ENCODE measurements at regions of chr1 and their contacts with region 1.

Region 1: GRCh38 chr1:217431393-217431792 is 199.5 kb downstream of the GPATCH2 start:
- DNase-seq: no peak
- H3K4me3 ChIP-seq: no peak overlapping the region
- H3K4me3 Mint-ChIP-seq: no peak overlapping the region
- H3K27ac Mint-ChIP-seq: no peak overlapping the region
- H3K4me1 ChIP-seq: no peaks in the 10 kb centered on the region
- H3K4me1 Mint-ChIP-seq: no peaks in the 10 kb centered on the region
- H3K27me3 ChIP-seq: no peaks in the 10 kb centered on the region
- H3K27me3 Mint-ChIP-seq: no peaks in the 10 kb centered on the region
- CTCF ChIP-seq: no peak

Region 2: DNA sequence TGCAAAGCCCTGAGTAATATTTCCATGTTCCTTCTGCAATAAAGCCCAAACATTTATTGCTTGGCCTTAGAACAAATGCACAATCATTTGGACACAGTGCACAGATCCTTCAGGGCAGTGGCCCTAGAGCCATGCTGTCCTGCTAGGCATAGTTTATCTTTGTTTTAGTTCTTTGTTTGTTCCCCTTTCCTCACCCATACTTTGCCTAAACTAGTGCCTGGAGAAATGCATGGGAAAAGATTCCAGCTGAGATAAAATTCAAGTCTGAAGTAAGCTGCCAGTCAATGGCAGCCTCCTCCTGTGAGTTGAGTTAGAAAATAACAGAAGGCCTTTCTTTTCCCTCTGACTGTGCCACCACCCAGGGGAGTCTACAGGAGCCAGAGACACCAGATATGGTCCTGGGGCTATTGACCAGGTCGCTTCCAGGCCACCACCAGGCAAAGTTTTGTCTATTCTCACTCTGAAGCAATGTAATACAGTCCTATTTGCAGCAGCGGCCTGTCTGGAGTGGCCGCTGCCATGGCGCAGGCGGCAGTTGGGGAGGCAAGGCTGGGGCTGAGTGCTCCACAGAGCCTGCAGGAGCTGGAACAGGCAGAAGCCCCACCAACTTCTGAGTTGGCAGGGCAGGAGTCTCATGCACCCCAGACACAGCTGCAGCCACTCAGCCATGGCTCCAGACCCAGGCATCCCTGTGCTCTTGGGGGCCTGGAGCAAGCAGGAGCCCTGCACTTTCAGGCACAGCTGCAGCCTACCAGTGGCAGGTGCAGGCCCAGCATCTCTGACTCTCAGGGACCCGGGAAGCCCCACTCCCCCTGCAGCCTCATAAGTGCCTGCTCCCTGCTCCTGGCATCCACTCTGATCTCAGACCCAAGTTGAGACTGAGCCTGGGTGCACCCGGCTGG is 59.1 kb before region 1 on chr1:
- CTCF ChIA-PET with region 1: no interaction called
- POLR2A ChIA-PET with region 1: no interaction called
- intact Hi-C with region 1: no loop called
- DNase-seq: no peak
- H3K4me3 ChIP-seq: no peak overlapping the region
- H3K4me3 Mint-ChIP-seq: no peak overlapping the region
- H3K27ac Mint-ChIP-seq: no peak overlapping the region
- H3K4me1 ChIP-seq: no peaks in the 10 kb centered on the region
- H3K4me1 Mint-ChIP-seq: no peaks in the 10 kb centered on the region
- H3K27me3 ChIP-seq: no peaks in the 10 kb centered on the region
- H3K27me3 Mint-ChIP-seq: no peaks in the 10 kb centered on the region
- CTCF ChIP-seq: no peak

Region 3: GRCh38 chr1:217542837-217543236 is 111.4 kb after region 1 on chr1:
- CTCF ChIA-PET with region 1: no interaction called
- POLR2A ChIA-PET with region 1: no interaction called
- intact Hi-C with region 1: no loop called
- DNase-seq: no peak
- H3K4me3 ChIP-seq: no peak overlapping the region
- H3K4me3 Mint-ChIP-seq: no peak overlapping the region
- H3K27ac Mint-ChIP-seq: no peak overlapping the region
- H3K4me1 ChIP-seq: 0 out of 2 replicates have a peak, but pooled peaks cover 9% of the 10 kb centered on the region
- H3K4me1 Mint-ChIP-seq: no peaks in the 10 kb centered on the region
- H3K27me3 ChIP-seq: no peaks in the 10 kb centered on the region
- H3K27me3 Mint-ChIP-seq: no peaks in the 10 kb centered on the region
- CTCF ChIP-seq: no peak

Region 4: GRCh38 chr1:217590598-217590997 is 159.2 kb after region 1 on chr1:
- CTCF ChIA-PET with region 1: no interaction called
- POLR2A ChIA-PET with region 1: no interaction called
- intact Hi-C with region 1: loop called (anchors 10 kb)
- DNase-seq: peak; percentile 37 to 41
- H3K4me3 ChIP-seq: no peak overlapping the region
- H3K4me3 Mint-ChIP-seq: no peak overlapping the region
- H3K27ac Mint-ChIP-seq: peak overlapping the region; percentile 10
- H3K4me1 ChIP-seq: peaks cover 28% of the 10 kb centered on the region
- H3K4me1 Mint-ChIP-seq: peaks cover 20% of the 10 kb centered on the region
- H3K27me3 ChIP-seq: no peaks in the 10 kb centered on the region
- H3K27me3 Mint-ChIP-seq: no peaks in the 10 kb centered on the region
- CTCF ChIP-seq: peak; percentile 34 to 35

Region 5: DNA sequence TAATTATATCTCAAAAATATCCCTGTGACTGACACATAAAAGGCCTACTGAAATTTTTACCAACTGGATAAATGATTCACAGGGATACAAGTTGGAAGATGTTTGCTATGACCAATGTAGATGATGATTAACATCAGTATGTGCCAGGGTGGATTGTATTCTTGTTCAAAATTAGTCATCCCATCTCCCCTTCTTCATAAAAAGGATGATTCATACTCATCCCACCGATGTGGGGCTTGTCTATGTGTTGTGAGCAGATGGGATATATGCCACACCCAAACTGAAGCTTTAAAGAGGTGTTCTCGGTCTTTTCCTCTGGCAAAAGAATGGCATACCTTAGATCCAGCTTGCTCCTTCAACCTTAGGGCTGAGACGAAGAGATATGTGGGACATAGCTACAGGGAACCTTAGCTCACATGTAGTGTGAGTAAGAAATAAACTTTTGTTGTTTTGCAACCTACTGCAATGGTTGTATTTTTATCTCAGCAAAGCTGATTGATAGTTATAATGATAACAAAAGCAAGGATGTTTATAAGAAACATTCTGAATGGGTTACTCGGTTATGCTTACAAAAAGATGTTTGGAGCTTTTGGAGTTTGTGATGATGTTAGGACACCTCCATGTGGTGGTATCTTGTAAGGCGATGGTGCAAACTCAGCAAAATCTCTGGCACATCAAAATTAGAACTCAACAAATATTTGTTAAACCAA is 229.1 kb after region 1 on chr1:
- CTCF ChIA-PET with region 1: no interaction called
- POLR2A ChIA-PET with region 1: no interaction called
- intact Hi-C with region 1: loop called (anchors 1 kb)
- DNase-seq: no peak
- H3K4me3 ChIP-seq: no peak overlapping the region
- H3K4me3 Mint-ChIP-seq: no peak overlapping the region
- H3K27ac Mint-ChIP-seq: no peak overlapping the region
- H3K4me1 ChIP-seq: no peaks in the 10 kb centered on the region
- H3K4me1 Mint-ChIP-seq: peaks cover 11% of the 10 kb centered on the region
- H3K27me3 ChIP-seq: no peaks in the 10 kb centered on the region
- H3K27me3 Mint-ChIP-seq: peaks cover 3% of the 10 kb centered on the region
- CTCF ChIP-seq: peak; percentile 31 to 58

Region 6: DNA sequence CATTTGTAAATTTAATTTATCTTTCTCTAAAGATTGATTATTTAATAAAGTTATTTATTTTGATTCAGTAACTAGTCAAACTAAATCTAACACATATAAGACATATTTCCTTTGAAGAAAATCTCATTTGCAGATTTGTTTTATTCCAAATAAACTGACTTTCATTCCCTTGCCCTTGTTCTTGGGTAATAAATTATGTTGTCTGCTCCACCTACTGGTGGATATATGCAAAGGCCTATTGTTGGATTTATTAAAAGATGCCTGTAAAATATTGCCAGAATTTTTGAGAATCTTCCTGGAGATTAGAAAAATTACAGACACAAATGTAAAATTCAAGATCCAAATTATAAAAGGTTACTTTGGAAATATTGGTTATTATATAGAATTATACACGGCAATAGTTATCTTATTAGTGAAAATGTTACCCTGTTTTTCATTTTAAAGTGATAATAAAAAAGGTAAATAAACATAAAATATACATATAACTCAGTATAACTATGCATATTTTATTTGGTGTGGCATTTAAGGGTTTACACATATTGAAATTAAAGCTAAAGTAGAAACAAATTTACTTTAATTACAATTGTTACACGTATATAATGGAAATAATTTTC is 315.9 kb after region 1 on chr1:
- CTCF ChIA-PET with region 1: no interaction called
- POLR2A ChIA-PET with region 1: no interaction called
- intact Hi-C with region 1: loop called (anchors 1 kb)
- DNase-seq: no peak
- H3K4me3 ChIP-seq: no peak overlapping the region
- H3K4me3 Mint-ChIP-seq: no peak overlapping the region
- H3K27ac Mint-ChIP-seq: no peak overlapping the region
- H3K4me1 ChIP-seq: no peaks in the 10 kb centered on the region
- H3K4me1 Mint-ChIP-seq: no peaks in the 10 kb centered on the region
- H3K27me3 ChIP-seq: no peaks in the 10 kb centered on the region
- H3K27me3 Mint-ChIP-seq: no peaks in the 10 kb centered on the region
- CTCF ChIP-seq: peak; percentile 71 to 77

Region 7: GRCh38 chr1:218090459-218090858 is 659.1 kb after region 1 on chr1:
- CTCF ChIA-PET with region 1: no interaction called
- POLR2A ChIA-PET with region 1: no interaction called
- intact Hi-C with region 1: no loop called
- DNase-seq: no peak
- H3K4me3 ChIP-seq: no peak overlapping the region
- H3K4me3 Mint-ChIP-seq: no peak overlapping the region
- H3K27ac Mint-ChIP-seq: no peak overlapping the region
- H3K4me1 ChIP-seq: no peaks in the 10 kb centered on the region
- H3K4me1 Mint-ChIP-seq: no peaks in the 10 kb centered on the region
- H3K27me3 ChIP-seq: no peaks in the 10 kb centered on the region
- H3K27me3 Mint-ChIP-seq: no peaks in the 10 kb centered on the region
- CTCF ChIP-seq: no peak